PC-9 (cell line): ENCODE measurements at regions of chr4 and their contacts with region 1.

Region 1: DNA sequence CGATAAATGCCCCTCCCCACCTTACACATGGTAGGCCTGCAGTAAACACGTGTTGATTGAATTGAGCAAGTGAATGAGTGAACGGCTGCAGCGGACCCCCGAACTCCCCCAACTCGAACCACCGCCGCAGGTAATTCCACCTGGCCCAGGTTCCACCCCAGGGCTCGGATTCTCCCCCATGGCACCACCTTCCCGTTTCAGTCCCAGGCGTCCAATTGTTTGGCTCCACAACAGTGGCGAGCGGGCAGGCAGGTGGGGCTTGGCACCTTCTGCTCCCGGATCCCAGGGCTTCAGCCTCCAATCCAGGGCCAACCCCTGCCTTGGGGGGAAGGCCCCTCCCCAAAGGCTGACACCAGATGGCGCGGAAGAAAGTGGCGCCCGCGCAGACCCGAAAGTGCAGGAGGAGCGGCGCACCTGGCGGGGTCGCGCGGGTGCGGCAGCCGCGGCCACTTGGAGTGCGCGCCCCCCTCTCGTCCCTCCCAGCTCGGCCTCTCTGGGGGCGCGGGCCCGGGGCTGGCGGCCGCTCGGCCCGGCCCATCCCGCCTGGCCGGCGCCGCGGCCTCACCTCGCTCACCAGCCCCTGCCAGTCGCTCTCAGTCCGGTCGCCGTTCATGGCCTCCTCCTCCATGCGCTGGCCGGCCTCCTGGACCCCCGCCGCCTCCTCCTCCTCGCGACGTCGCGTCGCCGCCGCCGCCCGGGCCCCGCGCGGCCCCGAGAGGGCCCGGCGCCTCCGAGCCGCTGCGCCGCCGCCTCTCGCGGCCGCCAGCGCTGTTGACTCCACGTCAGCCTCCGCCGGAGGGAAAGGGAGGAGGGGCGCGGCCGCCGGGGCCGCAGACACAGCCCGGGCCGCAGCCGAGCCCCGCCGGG is at the start of gene CCDC149:
- DNase-seq: peak; percentile 76 to 84
- H3K4me3 ChIP-seq: peak within 1 kb of the TSS; percentile 58
- H3K27ac ChIP-seq: peak within 1 kb of the TSS; percentile 40; the same call in 1 of the 2 replicates
- H3K4me1 ChIP-seq: peaks cover 13% of the 10 kb centered on the region
- H3K27me3 ChIP-seq: no peaks in the 10 kb centered on the region
- CTCF ChIP-seq: no peak
- total RNA-seq, gene CCDC149: 8.1 and 9.8 TPM in 2 replicates

Region 2: DNA sequence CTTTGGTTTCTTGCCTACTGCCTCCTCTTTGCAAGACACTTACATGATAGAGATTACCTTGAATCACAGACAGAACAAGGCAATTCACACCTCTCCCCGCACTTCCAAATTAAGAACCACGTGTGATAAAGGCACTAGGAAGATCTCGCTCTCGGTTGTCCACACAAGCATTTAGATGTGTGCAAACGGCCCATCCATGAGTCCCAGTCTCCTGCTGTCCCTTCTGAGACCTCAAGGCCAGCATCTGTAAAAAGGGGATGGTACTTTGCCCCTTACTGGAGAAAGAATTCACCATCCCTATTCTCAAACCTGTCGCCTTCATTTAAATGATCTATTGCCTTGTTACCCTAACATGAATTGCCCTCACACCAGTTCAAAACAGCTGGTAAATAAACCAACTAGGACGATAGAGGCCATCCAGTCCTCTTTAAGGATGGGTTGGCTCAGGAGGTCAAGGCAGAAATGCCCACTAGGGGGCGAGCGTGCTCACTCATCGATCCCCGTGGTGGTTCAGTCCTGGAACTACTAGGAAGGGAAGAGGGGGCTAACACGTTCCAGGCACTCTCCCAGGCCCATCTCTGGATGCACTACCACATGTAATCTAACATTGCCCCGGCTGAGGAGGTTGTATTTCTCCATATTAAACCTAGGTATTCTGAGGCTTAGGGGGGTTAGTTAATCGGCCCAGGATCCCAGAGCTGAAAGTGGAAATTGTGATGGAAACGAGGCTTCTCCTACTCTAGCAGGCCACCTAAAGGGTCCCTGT is 423.9 kb before region 1 on chr4:
- CTCF ChIA-PET with region 1: no interaction called
- POLR2A ChIA-PET with region 1: no interaction called
- intact Hi-C with region 1: loop called (anchors 10 kb)
- DNase-seq: peak in 1 of 2 experiments; percentile 61
- H3K4me3 ChIP-seq: no peak overlapping the region
- H3K27ac ChIP-seq: no peak overlapping the region
- H3K4me1 ChIP-seq: no peaks in the 10 kb centered on the region
- H3K27me3 ChIP-seq: no peaks in the 10 kb centered on the region
- CTCF ChIP-seq: peak; percentile 82

Region 3: GRCh38 chr4:24768604-24769003 is 143.9 kb before region 1 on chr4:
- CTCF ChIA-PET with region 1: no interaction called
- POLR2A ChIA-PET with region 1: no interaction called
- intact Hi-C with region 1: loop called (anchors 5 kb)
- DNase-seq: no peak
- H3K4me3 ChIP-seq: no peak overlapping the region
- H3K27ac ChIP-seq: no peak overlapping the region
- H3K4me1 ChIP-seq: peaks cover 21% of the 10 kb centered on the region
- H3K27me3 ChIP-seq: no peaks in the 10 kb centered on the region
- CTCF ChIP-seq: no peak

Region 4: GRCh38 chr4:24840821-24841587 is 71.5 kb before region 1 on chr4:
- CTCF ChIA-PET with region 1: no interaction called
- POLR2A ChIA-PET with region 1: no interaction called
- intact Hi-C with region 1: loop called (anchors 2 kb)
- DNase-seq: peak; percentile 49 to 93
- H3K4me3 ChIP-seq: no peak overlapping the region
- H3K27ac ChIP-seq: peak overlapping the region; percentile 41
- H3K4me1 ChIP-seq: peaks cover 11% of the 10 kb centered on the region
- H3K27me3 ChIP-seq: no peaks in the 10 kb centered on the region
- CTCF ChIP-seq: no peak

Region 5: DNA sequence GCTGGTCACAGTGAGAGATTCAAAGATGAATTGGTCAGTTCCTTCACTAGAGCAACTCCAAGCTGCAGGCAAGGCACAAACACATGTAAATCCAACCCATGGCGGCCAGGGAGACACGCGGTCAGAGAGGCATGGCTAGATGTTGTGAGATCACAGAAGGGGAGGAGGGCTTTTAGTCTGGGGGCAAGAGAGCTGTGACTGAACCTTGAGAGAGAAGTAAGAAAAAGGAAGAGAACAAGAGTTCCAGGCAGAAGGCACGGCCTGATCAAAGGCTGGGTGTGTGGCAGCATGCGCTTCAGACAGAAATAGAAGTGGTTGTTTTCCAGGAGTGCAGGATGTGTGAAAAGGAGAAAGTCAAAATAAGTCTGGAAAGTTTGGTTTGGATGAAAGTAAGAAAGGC is 15.5 kb before region 1 on chr4:
- CTCF ChIA-PET with region 1: no interaction called
- POLR2A ChIA-PET with region 1: no interaction called
- intact Hi-C with region 1: no loop called
- DNase-seq: no peak
- H3K4me3 ChIP-seq: no peak overlapping the region
- H3K27ac ChIP-seq: no peak overlapping the region
- H3K4me1 ChIP-seq: no peaks in the 10 kb centered on the region
- H3K27me3 ChIP-seq: no peaks in the 10 kb centered on the region
- CTCF ChIP-seq: no peak

Region 6: GRCh38 chr4:24988776-24989175 is 76.3 kb after region 1 on chr4:
- CTCF ChIA-PET with region 1: interaction called, 13 read pairs
- POLR2A ChIA-PET with region 1: no interaction called
- intact Hi-C with region 1: no loop called
- DNase-seq: peak in 1 of 2 experiments; percentile 11
- H3K4me3 ChIP-seq: no peak overlapping the region
- H3K27ac ChIP-seq: no peak overlapping the region
- H3K4me1 ChIP-seq: no peaks in the 10 kb centered on the region
- H3K27me3 ChIP-seq: no peaks in the 10 kb centered on the region
- CTCF ChIP-seq: peak; percentile 64

Region 7: GRCh38 chr4:25608644-25609043 is 696.2 kb after region 1 on chr4:
- CTCF ChIA-PET with region 1: no interaction called
- POLR2A ChIA-PET with region 1: no interaction called
- intact Hi-C with region 1: no loop called
- DNase-seq: no peak
- H3K4me3 ChIP-seq: no peak overlapping the region
- H3K27ac ChIP-seq: no peak overlapping the region
- H3K4me1 ChIP-seq: no peaks in the 10 kb centered on the region
- H3K27me3 ChIP-seq: no peaks in the 10 kb centered on the region
- CTCF ChIP-seq: no peak